Activated CD4-positive, alpha-beta memory T cell treated with anti-CD3 and anti-CD28 coated beads for 36 hours (primary cell): ENCODE measurements at regions of chr17 and their contacts with region 1.

Region 1: GRCh38 chr17:43878260-43879175 is 28.8 kb downstream of the MPP2 start:
- DNase-seq: peak; percentile 76
- H3K4me3 Mint-ChIP-seq: no peak overlapping the region
- H3K27ac Mint-ChIP-seq: no peak overlapping the region
- H3K4me1 Mint-ChIP-seq: no peaks in the 10 kb centered on the region
- H3K27me3 Mint-ChIP-seq: no peaks in the 10 kb centered on the region

Region 2: GRCh38 chr17:43772877-43773648 is 105.5 kb before region 1 on chr17:
- CTCF ChIA-PET with region 1: no interaction called
- POLR2A ChIA-PET with region 1: no interaction called
- intact Hi-C with region 1: no loop called
- DNase-seq: no peak
- H3K4me3 Mint-ChIP-seq: no peak overlapping the region
- H3K27ac Mint-ChIP-seq: no peak overlapping the region
- H3K4me1 Mint-ChIP-seq: peaks cover 2% of the 10 kb centered on the region
- H3K27me3 Mint-ChIP-seq: no peaks in the 10 kb centered on the region

Region 3: DNA sequence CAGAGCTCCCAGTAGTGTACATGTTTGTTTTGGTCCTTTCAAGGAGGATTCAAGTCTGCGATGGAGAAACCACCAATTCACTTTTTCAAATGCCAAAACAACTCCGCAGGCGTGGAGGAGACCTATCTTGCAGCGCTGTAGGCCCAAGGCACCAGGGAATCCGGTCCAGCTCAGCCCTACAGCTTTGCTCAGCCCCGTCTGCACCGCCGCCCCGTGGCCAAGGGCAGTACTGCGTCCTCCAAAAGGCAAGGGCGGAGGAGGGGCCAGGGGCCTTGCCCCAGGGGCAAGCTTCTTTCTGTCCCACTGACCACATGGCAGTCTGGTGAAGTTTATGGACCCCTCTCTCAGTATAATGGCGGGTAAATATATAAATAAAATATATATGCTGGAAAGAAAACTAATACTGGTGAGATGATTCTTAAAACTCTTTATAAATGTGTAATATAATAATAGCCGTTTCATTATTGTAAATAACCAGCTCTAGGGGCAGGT is 32.3 kb before region 1 on chr17:
- CTCF ChIA-PET with region 1: interaction called, 11 read pairs
- POLR2A ChIA-PET with region 1: no interaction called
- intact Hi-C with region 1: no loop called
- DNase-seq: peak; percentile 86
- H3K4me3 Mint-ChIP-seq: no peak overlapping the region
- H3K27ac Mint-ChIP-seq: no peak overlapping the region
- H3K4me1 Mint-ChIP-seq: no peaks in the 10 kb centered on the region
- H3K27me3 Mint-ChIP-seq: peaks cover 23% of the 10 kb centered on the region

Region 4: DNA sequence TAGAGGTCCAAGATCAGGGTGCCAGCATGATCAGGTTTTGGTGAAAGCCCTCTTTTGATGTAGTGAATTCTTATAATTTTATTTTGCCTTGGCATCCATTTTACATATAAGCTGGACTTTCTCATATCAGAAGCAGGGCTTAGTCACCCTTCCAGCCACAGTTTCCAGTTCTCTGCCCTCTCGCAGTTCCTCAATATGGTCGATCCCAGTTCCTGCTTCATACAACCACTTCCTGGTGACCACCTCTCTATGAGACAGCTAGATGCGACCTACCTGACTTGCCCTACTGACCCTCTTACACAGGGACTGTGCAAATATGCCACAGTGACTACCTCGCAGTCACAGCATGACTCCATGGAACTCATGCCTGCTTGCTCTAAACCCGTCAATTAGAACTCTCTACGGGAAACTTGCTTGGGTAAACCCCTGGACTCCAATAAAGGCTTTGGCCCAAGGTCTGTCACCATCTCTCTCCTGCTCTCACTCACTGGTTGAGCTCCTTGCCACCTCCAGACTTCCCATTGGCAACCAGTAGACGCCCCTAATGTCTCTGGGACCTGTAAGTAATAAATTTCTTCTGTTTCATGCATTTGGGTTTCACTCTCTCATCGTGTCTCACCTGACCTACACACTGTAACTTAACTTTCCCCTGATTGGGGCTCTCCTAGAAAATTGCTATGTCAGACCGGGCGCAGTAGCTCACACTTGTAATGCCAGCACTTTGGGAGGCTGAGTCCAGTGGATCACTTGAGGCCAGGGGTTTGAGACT is 10.1 kb before region 1 on chr17:
- CTCF ChIA-PET with region 1: interaction called, 32 read pairs
- POLR2A ChIA-PET with region 1: no interaction called
- intact Hi-C with region 1: no loop called
- DNase-seq: no peak
- H3K4me3 Mint-ChIP-seq: no peak overlapping the region
- H3K27ac Mint-ChIP-seq: no peak overlapping the region
- H3K4me1 Mint-ChIP-seq: no peaks in the 10 kb centered on the region
- H3K27me3 Mint-ChIP-seq: peaks cover 15% of the 10 kb centered on the region

Region 5: DNA sequence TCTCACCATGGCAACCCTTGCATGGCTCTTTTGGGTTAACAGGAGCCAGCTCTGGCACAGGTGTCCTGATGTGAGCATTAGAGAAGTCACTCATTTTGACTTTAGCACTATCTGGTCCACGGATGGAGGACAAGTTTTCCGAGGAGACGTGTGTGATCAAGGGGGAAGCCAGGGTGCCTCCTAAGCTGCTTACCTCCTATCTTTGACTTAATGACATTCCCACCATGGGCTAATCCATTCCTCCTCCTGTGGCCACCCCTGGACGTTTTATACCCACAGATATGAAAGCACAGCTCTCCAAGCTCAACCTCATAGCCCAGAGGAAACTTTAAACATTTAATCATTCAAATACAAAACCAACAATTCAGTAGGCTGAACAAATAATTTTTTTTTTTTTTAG is 10.0 kb after region 1 on chr17:
- CTCF ChIA-PET with region 1: interaction called, 60 read pairs
- POLR2A ChIA-PET with region 1: no interaction called
- intact Hi-C with region 1: no loop called
- DNase-seq: no peak
- H3K4me3 Mint-ChIP-seq: no peak overlapping the region
- H3K27ac Mint-ChIP-seq: no peak overlapping the region
- H3K4me1 Mint-ChIP-seq: no peaks in the 10 kb centered on the region
- H3K27me3 Mint-ChIP-seq: no peaks in the 10 kb centered on the region

Region 6: DNA sequence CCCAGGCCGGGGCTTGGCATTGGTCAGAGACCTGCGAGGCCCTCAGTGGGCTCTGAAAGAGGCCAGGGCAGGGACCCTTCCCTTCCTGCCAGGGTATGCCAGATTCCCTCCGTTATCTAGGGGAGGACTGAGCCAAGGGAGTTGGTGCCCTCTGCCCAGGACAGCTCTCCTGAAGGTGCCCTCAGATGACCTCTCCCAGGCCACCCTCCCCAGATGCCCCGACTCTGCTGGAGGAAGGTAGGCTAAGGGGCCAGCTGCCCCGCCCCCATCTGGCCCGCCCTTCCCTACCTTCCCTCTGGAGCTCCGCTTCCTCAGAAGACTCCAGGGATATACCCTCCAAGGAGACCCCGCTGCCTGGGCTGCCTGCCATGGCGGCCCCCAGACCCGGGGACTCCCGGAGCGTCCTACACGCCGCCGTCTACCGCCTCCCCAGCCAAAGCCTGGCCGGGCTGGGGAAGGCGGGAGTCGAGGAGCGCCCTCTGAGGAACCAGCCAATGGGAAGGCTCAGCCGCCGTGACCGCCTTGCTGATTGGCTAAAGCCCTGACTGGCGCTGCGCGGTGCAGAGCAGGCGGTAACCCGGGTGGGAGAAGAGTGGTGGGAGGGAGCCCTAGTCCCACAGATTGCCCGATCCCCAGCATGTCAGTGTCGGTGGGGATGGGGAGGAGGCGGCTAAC is 21.8 kb after region 1 on chr17:
- CTCF ChIA-PET with region 1: interaction called, 60 read pairs
- POLR2A ChIA-PET with region 1: no interaction called
- intact Hi-C with region 1: no loop called
- DNase-seq: peak; percentile 90
- H3K4me3 Mint-ChIP-seq: peak overlapping the region; percentile 69
- H3K27ac Mint-ChIP-seq: no peak overlapping the region
- H3K4me1 Mint-ChIP-seq: peaks cover 7% of the 10 kb centered on the region
- H3K27me3 Mint-ChIP-seq: peaks cover 2% of the 10 kb centered on the region

Region 7: GRCh38 chr17:43907425-43907981 is 29.0 kb after region 1 on chr17 and contains the start of gene MPP2:
- CTCF ChIA-PET with region 1: interaction called, 12 read pairs
- POLR2A ChIA-PET with region 1: no interaction called
- intact Hi-C with region 1: no loop called
- DNase-seq: peak; percentile 71
- H3K4me3 Mint-ChIP-seq: peak within 1 kb of the TSS; percentile 67
- H3K27ac Mint-ChIP-seq: no peak within 1 kb of the TSS
- H3K4me1 Mint-ChIP-seq: peaks cover 17% of the 10 kb centered on the region
- H3K27me3 Mint-ChIP-seq: peaks cover 11% of the 10 kb centered on the region
- total RNA-seq, gene MPP2: 1.8 to 2.0 TPM

Region 8: GRCh38 chr17:43994272-43995149 is 116.0 kb after region 1 on chr17:
- CTCF ChIA-PET with region 1: interaction called, 47 read pairs
- POLR2A ChIA-PET with region 1: no interaction called
- intact Hi-C with region 1: loop called (anchors 1 kb)
- DNase-seq: peak; percentile 79
- H3K4me3 Mint-ChIP-seq: no peak overlapping the region
- H3K27ac Mint-ChIP-seq: no peak overlapping the region
- H3K4me1 Mint-ChIP-seq: no peaks in the 10 kb centered on the region
- H3K27me3 Mint-ChIP-seq: peaks cover 12% of the 10 kb centered on the region

Region 9: DNA sequence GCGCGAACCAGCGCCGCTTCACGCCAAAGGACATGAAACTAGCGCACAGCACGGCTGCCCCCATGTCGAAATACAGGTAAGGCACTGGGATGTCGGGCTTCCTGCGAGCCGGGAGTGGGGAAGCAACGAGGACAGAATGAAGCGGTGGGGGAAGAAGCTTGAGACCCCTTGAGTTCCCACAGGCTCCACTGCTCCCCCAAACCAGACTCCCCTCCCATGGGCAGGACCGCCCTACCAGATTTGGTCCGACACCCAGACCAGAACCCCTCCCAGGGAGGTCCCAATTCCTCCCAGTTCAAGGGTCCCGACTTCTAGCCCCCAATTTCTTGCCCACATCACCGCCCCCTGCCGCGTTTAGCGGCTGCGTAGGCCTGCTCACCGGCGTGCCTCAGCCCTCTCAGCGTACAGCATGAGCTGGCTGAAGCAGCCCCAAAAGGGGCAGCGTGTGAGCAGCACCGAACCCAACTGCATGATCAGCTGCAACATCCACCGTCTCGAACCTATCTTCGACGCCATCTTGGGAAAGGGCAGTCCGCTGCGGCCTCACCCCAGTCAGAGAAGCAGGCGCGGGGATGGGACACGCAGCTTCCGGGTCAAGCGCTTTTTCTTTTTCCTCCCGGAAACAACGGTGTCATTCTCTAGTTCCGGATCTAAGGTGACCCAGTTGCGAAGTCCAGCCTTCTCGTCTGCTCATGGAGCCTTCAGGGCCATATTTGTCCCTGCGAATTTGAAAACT is 136.1 kb after region 1 on chr17 and contains the start of gene TMEM101:
- CTCF ChIA-PET with region 1: no interaction called
- POLR2A ChIA-PET with region 1: no interaction called
- intact Hi-C with region 1: no loop called
- DNase-seq: peak; percentile 92
- H3K4me3 Mint-ChIP-seq: peak within 1 kb of the TSS; percentile 100
- H3K27ac Mint-ChIP-seq: peak within 1 kb of the TSS; percentile 79
- H3K4me1 Mint-ChIP-seq: peaks cover 18% of the 10 kb centered on the region
- H3K27me3 Mint-ChIP-seq: no peaks in the 10 kb centered on the region
- total RNA-seq, gene TMEM101: 27.6 to 28.2 TPM